ENCODE measurements at regions of chr7 and their contacts with region 1.

Region 1: GRCh38 chr7:127585044-127585953 is at the start of gene GCC1:
- DNase-seq: peak; percentile 87 to 97 (median 93)
- ATAC-seq: peak; percentile 80
- H3K4me3 ChIP-seq: peak within 1 kb of the TSS; percentile 90
- H3K4me3 Mint-ChIP-seq: peak within 1 kb of the TSS; percentile 96
- H3K27ac ChIP-seq: peak within 1 kb of the TSS; percentile 71 to 72
- H3K27ac Mint-ChIP-seq: peak within 1 kb of the TSS; percentile 92
- H3K4me1 ChIP-seq: peaks cover 73% of the 10 kb centered on the region
- H3K4me1 Mint-ChIP-seq: peaks cover 88% of the 10 kb centered on the region
- H3K27me3 ChIP-seq: no peaks in the 10 kb centered on the region
- H3K27me3 Mint-ChIP-seq: no peaks in the 10 kb centered on the region
- CTCF ChIP-seq: no peak
- total RNA-seq, gene GCC1: 29.8 to 30.6 TPM

Region 2: DNA sequence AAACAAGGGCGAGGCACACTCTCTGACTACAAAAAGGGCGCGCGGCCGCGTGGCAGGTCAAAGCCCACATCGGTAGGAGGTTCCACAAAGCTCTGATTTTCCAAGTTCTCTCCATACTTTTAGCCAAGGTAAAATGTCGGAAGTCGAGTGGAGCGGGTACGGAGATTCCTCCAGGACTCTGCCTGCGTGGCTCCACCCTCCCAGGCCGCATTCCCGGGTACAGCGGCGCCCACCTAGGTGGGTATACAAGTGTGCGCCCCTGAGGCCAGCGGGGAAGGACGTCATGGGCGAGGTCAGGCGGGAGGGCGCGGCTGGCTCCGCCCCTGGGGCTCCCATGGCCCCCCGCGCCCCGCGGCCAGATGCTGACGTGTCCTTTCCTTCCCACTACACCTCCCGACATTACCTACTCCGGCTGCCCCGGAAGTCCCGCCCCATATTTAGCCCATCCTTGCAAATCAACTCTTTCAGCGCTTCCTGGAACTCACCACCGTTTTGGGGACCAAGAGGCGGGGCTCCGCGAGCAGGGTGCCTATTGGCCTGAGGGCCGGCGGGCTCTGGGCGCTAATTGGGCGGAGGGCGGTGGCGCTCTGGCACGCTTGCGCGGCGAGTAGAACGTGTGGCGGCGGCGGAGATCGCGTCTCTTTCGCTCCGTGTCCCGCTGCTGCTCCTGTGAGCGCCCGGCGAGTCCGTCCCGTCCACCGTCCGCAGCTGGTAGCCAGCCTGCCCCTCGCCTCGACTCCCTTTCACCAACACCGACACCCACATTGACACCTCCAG is 66.4 kb after region 1 on chr7 and contains the start of gene SND1:
- CTCF ChIA-PET with region 1: no interaction called
- POLR2A ChIA-PET with region 1: interaction called, 21 read pairs
- intact Hi-C with region 1: loop called (anchors 1 to 2 kb)
- DNase-seq: peak; percentile 95 to 100 (median 98)
- ATAC-seq: peak; percentile 93
- H3K4me3 ChIP-seq: peak within 1 kb of the TSS; percentile 99
- H3K4me3 Mint-ChIP-seq: peak within 1 kb of the TSS; percentile 93
- H3K27ac ChIP-seq: peak within 1 kb of the TSS; percentile 89 to 94
- H3K27ac Mint-ChIP-seq: no peak within 1 kb of the TSS
- H3K4me1 ChIP-seq: peaks cover 43% of the 10 kb centered on the region
- H3K4me1 Mint-ChIP-seq: peaks cover 55% of the 10 kb centered on the region
- H3K27me3 ChIP-seq: no peaks in the 10 kb centered on the region
- H3K27me3 Mint-ChIP-seq: no peaks in the 10 kb centered on the region
- CTCF ChIP-seq: no peak
- total RNA-seq, gene SND1: 104 to 113 TPM

Region 3: GRCh38 chr7:128041203-128041602 is 455.9 kb after region 1 on chr7:
- CTCF ChIA-PET with region 1: no interaction called
- POLR2A ChIA-PET with region 1: no interaction called
- intact Hi-C with region 1: no loop called
- DNase-seq: no peak
- ATAC-seq: no peak
- H3K4me3 ChIP-seq: no peak overlapping the region
- H3K4me3 Mint-ChIP-seq: no peak overlapping the region
- H3K27ac ChIP-seq: no peak overlapping the region
- H3K27ac Mint-ChIP-seq: no peak overlapping the region
- H3K4me1 ChIP-seq: peaks cover 5% of the 10 kb centered on the region
- H3K4me1 Mint-ChIP-seq: peaks cover 34% of the 10 kb centered on the region
- H3K27me3 ChIP-seq: no peaks in the 10 kb centered on the region
- H3K27me3 Mint-ChIP-seq: no peaks in the 10 kb centered on the region
- CTCF ChIP-seq: no peak

Region 4: DNA sequence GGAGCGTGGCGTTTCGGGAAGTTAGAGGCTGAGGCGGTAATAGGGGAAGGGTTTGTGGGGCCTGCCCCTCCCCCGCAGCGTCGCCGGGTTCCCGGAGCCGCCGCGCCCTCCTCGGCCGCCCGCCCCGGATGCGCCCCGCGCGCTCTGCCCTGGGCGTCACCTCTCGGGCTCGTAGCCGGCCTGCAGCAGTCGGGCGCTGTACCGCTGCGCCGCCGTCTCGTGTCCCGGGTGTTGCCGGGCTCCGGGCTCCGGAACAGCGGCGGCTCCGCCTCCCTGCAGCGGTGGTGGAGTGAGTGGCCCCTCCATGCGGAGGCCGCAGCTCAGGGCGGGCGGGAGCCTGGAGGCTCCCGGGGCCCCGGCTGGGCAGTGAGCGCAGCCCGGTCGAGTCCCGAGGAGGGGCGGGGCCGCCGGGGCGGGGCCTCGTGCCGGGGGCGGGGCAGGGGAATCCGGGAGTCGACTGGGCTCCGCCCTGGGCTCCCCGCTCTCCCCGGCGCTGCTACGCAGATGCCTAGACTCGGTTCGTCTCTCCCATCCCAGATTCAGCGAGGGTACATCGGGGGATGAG is 824.4 kb after region 1 on chr7 and contains the start of gene IMPDH1:
- CTCF ChIA-PET with region 1: no interaction called
- POLR2A ChIA-PET with region 1: no interaction called
- intact Hi-C with region 1: loop called in 1 of 2 experiments (anchors 5 kb)
- DNase-seq: peak; percentile 65 to 91 (median 85)
- ATAC-seq: peak; percentile 72
- H3K4me3 ChIP-seq: peak within 1 kb of the TSS; percentile 95
- H3K4me3 Mint-ChIP-seq: peak within 1 kb of the TSS; percentile 92
- H3K27ac ChIP-seq: peak within 1 kb of the TSS; percentile 66 to 85
- H3K27ac Mint-ChIP-seq: peak within 1 kb of the TSS; percentile 86
- H3K4me1 ChIP-seq: peaks cover 52% of the 10 kb centered on the region
- H3K4me1 Mint-ChIP-seq: peaks cover 44% of the 10 kb centered on the region
- H3K27me3 ChIP-seq: no peaks in the 10 kb centered on the region
- H3K27me3 Mint-ChIP-seq: no peaks in the 10 kb centered on the region
- CTCF ChIP-seq: no peak
- total RNA-seq, gene IMPDH1: 26.5 to 27.0 TPM

Region 5: GRCh38 chr7:129054438-129055293 is 1469.4 kb after region 1 on chr7 and contains the start of gene TNPO3:
- CTCF ChIA-PET with region 1: no interaction called
- POLR2A ChIA-PET with region 1: no interaction called
- intact Hi-C with region 1: loop called in 1 of 2 experiments (anchors 5 kb)
- DNase-seq: peak; percentile 80 to 94 (median 86)
- ATAC-seq: peak; percentile 87
- H3K4me3 ChIP-seq: peak within 1 kb of the TSS; percentile 88
- H3K4me3 Mint-ChIP-seq: peak within 1 kb of the TSS; percentile 99
- H3K27ac ChIP-seq: peak within 1 kb of the TSS; percentile 91 to 98
- H3K27ac Mint-ChIP-seq: peak within 1 kb of the TSS; percentile 96
- H3K4me1 ChIP-seq: peaks cover 25% of the 10 kb centered on the region
- H3K4me1 Mint-ChIP-seq: peaks cover 49% of the 10 kb centered on the region
- H3K27me3 ChIP-seq: peaks cover 0 to 4% of the 10 kb centered on the region in 2 experiments
- H3K27me3 Mint-ChIP-seq: no peaks in the 10 kb centered on the region
- CTCF ChIP-seq: no peak
- total RNA-seq, gene TNPO3: 17.1 to 18.7 TPM